ENCODE measurements at regions of chr14 and their contacts with region 1.

Region 1: GRCh38 chr14:77457522-77458290 is at the starts of genes AHSA1 and VIPAS39:
- DNase-seq: peak; percentile 99
- ATAC-seq: peak; percentile 93
- H3K4me3 Mint-ChIP-seq: peak within 1 kb of the TSS; percentile 93
- H3K27ac Mint-ChIP-seq: peak within 1 kb of the TSS; percentile 99
- H3K4me1 Mint-ChIP-seq: peaks cover 36% of the 10 kb centered on the region
- H3K27me3 Mint-ChIP-seq: no peaks in the 10 kb centered on the region
- total RNA-seq, gene AHSA1: 219 to 266 TPM
- total RNA-seq, gene VIPAS39: 16.9 to 19.3 TPM

Region 2: GRCh38 chr14:77554207-77554606 is 96.5 kb after region 1 on chr14:
- CTCF ChIA-PET with region 1: interaction called, 33 read pairs
- DNase-seq: no peak
- ATAC-seq: peak; percentile 59
- H3K4me3 Mint-ChIP-seq: peak overlapping the region; percentile 24
- H3K27ac Mint-ChIP-seq: peak overlapping the region; percentile 80
- H3K4me1 Mint-ChIP-seq: peaks cover 13% of the 10 kb centered on the region
- H3K27me3 Mint-ChIP-seq: no peaks in the 10 kb centered on the region

Region 3: GRCh38 chr14:77707724-77708408 is 250.2 kb after region 1 on chr14 and contains the starts of genes ALKBH1 and SLIRP:
- CTCF ChIA-PET with region 1: interaction called, 14 read pairs
- DNase-seq: peak; percentile 93
- ATAC-seq: peak; percentile 99
- H3K4me3 Mint-ChIP-seq: peak within 1 kb of the TSS; percentile 98
- H3K27ac Mint-ChIP-seq: peak within 1 kb of the TSS; percentile 99
- H3K4me1 Mint-ChIP-seq: peaks cover 40% of the 10 kb centered on the region
- H3K27me3 Mint-ChIP-seq: no peaks in the 10 kb centered on the region
- total RNA-seq, gene ALKBH1: 12.3 to 19.6 TPM
- total RNA-seq, gene SLIRP: 91.8 to 94.5 TPM

Measured in activated CD8-positive, alpha-beta memory T cell treated with anti-CD3 and anti-CD28 coated beads, Interleukin-2, amount 10 ng/mL, durations not matched to agents 7 days and 5 days (primary cell).